Endothelial cell of umbilical vein (primary cell): ENCODE measurements at regions of chr13 and their contacts with region 1.

Region 1: GRCh38 chr13:35210261-35210660 is 266.2 kb downstream of the MAB21L1 start:
- DNase-seq: peak; percentile 34
- H3K4me3 ChIP-seq: no peak overlapping the region
- H3K27ac ChIP-seq: no peak overlapping the region
- H3K4me1 ChIP-seq: no peaks in the 10 kb centered on the region
- H3K27me3 ChIP-seq: no peaks in the 10 kb centered on the region
- CTCF ChIP-seq: no peak
- POLR2A ChIP-seq: no peak

Region 2: DNA sequence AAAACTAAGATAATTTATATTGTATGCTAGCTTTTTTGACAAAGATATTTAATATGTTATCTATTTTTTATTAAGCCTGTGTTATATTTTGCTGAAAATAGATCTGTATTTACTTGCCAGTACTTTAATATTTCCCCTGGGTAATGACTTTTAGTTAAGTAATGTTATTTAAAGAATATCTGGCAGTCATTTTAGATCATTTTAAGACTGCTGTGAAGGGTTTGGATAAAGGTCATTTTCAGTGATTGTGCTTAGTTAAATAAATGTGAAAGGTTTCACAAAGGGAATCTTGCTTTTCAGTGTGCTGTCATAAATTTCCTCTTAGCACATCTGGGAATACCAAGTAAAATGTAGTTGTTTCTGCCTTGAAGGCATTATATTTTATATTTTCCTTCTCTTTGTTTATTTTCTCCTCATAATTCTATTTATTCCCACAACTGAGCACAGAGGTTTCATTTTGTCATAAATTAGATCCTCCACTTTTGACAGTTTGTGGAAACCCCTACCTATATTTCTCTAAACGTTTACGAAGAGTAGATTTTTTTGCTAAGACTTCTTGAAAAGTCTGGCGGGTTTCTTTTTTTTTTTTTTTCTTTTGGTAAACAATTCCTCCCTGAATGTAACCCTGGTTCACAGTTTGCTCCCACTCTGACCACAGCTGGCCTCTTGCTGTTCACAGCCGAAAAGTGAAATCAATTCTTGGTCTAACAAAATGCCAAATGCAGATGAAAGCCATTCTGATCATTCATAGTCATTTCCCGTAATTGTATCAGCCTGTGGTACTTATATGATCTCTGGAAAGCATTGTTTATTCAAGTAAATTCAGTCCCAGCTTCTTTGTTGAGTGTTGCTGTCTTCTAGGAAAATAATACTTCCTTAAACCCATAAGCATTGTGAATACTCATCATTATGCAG is 178.4 kb after region 1 on chr13:
- CTCF ChIA-PET with region 1: no interaction called
- POLR2A ChIA-PET with region 1: no interaction called
- dilution Hi-C with region 1: no loop called
- intact Hi-C with region 1: loop called (anchors 2 kb)
- DNase-seq: peak; percentile 87
- H3K4me3 ChIP-seq: peak overlapping the region in 1 of 3 experiments; percentile 15
- H3K27ac ChIP-seq: peak overlapping the region; percentile 26
- H3K4me1 ChIP-seq: peaks cover 31% of the 10 kb centered on the region
- H3K27me3 ChIP-seq: no peaks in the 10 kb centered on the region
- CTCF ChIP-seq: no peak
- POLR2A ChIP-seq: no peak

Region 3: GRCh38 chr13:35475960-35476943 is 266.0 kb after region 1 on chr13 and contains the start of gene MAB21L1:
- CTCF ChIA-PET with region 1: no interaction called
- POLR2A ChIA-PET with region 1: no interaction called
- dilution Hi-C with region 1: no loop called
- intact Hi-C with region 1: loop called (anchors 10 kb)
- DNase-seq: peak; percentile 24
- H3K4me3 ChIP-seq: peak within 1 kb of the TSS; percentile 0 to 63 (median 58)
- H3K27ac ChIP-seq: no peak within 1 kb of the TSS
- H3K4me1 ChIP-seq: no peaks in the 10 kb centered on the region
- H3K27me3 ChIP-seq: no peaks in the 10 kb centered on the region
- CTCF ChIP-seq: no peak
- POLR2A ChIP-seq: no peak
- total RNA-seq, gene MAB21L1: not detected in 2 replicates

Region 4: DNA sequence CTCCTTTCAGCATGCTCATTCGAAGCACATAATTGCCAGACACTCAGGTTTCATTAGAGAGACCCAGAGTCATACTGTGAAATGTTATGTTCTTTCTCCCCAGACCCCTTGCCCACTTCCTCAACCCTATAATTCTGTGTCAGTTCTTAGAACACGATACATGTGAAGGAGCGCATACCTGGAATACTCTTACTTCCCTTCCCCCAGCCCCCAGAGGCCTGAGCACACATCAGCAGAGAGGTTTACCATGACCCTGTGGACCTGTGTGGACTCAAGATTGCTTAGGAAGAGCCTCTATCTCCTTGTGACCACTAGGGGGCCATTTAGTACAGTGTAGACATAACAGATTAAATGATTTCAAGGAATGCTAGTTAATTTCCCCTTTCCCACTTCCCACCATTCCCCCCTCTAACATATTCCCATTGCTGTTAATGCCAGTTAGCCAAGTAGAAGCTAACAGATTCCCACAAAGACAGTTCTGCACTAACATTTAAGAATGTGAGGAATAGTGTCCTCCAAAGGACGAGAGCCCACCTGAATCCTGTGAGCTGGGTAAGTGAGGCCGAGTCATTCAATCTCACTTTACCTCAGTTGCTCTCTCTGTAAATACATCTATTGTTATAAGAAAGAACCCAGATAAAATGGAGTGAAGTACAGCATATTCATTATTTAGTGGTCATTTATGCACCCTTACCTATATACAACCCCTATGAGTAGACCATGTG is 420.5 kb after region 1 on chr13:
- CTCF ChIA-PET with region 1: interaction called, 3 read pairs
- POLR2A ChIA-PET with region 1: no interaction called
- dilution Hi-C with region 1: no loop called
- intact Hi-C with region 1: loop called (anchors 10 kb)
- DNase-seq: peak; percentile 13
- H3K4me3 ChIP-seq: no peak overlapping the region
- H3K27ac ChIP-seq: no peak overlapping the region
- H3K4me1 ChIP-seq: peaks cover 11% of the 10 kb centered on the region
- H3K27me3 ChIP-seq: no peaks in the 10 kb centered on the region
- CTCF ChIP-seq: peak; percentile 66 to 73
- POLR2A ChIP-seq: no peak

Region 5: GRCh38 chr13:35953537-35954206 is 743.4 kb after region 1 on chr13:
- CTCF ChIA-PET with region 1: interaction called, 5 read pairs
- POLR2A ChIA-PET with region 1: no interaction called
- dilution Hi-C with region 1: no loop called
- intact Hi-C with region 1: loop called (anchors 10 kb)
- DNase-seq: peak; percentile 79
- H3K4me3 ChIP-seq: no peak overlapping the region
- H3K27ac ChIP-seq: no peak overlapping the region
- H3K4me1 ChIP-seq: no peaks in the 10 kb centered on the region
- H3K27me3 ChIP-seq: no peaks in the 10 kb centered on the region
- CTCF ChIP-seq: peak; percentile 54 to 57
- POLR2A ChIP-seq: no peak